HEK293 (cell line): ENCODE measurements at regions of chr2 and their contacts with region 1.

Region 1: GRCh38 chr2:71510196-71510807 is 56.9 kb downstream of the DYSF start:
- H3K4me3 ChIP-seq: no peak overlapping the region
- H3K27ac ChIP-seq: no peak overlapping the region
- H3K4me1 ChIP-seq: no peaks in the 10 kb centered on the region
- CTCF ChIP-seq: peak; percentile 81

Region 2: DNA sequence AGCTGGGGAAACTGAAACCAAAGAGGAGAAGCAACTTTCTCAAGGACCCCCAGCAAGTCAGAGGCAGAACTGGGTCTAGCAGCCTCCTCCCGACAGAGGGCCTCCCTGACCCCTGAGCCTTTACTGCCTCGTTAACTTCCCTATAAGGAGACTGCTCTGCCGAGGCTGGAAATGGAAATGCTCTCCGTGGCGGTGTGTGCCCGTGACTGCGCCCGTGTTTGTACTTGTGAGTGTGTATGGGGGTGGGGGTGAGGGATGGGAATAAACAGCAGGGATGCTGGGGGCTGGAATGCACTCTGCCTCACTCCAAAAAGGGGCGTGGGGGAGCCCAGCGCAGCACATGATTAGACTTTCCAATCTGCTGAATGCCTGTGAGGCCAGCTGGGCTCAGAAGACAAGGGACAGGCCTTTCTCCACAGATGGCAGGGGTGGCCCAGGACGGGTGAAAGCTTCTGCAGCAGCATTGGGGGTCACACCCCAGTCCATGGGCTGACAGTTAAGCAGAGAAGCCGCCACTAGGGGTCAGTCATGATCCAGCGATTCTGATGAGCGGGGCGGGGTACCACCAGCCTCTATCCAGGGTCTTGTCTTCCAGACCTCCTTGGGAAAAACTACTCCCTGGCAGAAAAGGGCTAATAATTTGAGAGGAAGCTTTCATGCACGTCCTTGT is 353.0 kb before region 1 on chr2:
- CTCF ChIA-PET with region 1: interaction called, 16 read pairs
- POLR2A ChIA-PET with region 1: no interaction called
- H3K4me3 ChIP-seq: no peak overlapping the region
- H3K27ac ChIP-seq: no peak overlapping the region
- H3K4me1 ChIP-seq: peaks cover 4% of the 10 kb centered on the region; the same call in 1 of the 2 replicates
- CTCF ChIP-seq: peak; percentile 75

Region 3: GRCh38 chr2:71299507-71299906 is 210.8 kb before region 1 on chr2:
- CTCF ChIA-PET with region 1: interaction called, 94 read pairs
- POLR2A ChIA-PET with region 1: interaction called, 4 read pairs
- H3K4me3 ChIP-seq: no peak overlapping the region
- H3K27ac ChIP-seq: no peak overlapping the region
- H3K4me1 ChIP-seq: no peaks in the 10 kb centered on the region
- CTCF ChIP-seq: no peak

Region 4: DNA sequence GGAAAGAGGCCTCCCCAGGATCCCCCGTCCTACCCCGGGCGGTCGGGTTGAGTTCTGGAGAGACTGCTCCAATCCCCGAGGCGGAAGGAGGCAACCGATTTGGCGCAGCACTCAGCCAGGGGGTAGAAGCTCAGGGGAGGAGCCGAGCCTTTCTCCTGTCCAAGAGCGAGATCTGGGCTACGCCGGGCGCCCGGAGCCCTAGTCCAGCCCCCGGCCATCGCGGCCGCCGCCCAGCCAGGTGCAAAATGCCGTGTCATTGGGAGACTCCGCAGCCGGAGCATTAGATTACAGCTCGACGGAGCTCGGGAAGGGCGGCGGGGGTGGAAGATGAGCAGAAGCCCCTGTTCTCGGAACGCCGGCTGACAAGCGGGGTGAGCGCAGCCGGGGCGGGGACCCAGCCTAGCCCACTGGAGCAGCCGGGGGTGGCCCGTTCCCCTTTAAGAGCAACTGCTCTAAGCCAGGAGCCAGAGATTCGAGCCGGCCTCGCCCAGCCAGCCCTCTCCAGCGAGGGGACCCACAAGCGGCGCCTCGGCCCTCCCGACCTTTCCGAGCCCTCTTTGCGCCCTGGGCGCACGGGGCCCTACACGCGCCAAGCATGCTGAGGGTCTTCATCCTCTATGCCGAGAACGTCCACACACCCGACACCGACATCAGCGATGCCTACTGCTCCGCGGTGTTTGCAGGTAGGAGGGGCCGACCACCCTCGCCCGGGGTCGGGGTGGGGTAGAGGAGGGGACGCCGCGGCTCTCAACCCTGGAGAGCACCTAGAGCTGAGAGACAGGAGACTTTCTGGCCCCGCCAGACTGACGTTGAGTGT is 56.7 kb before region 1 on chr2 and contains the start of gene DYSF:
- CTCF ChIA-PET with region 1: interaction called, 11 read pairs
- POLR2A ChIA-PET with region 1: no interaction called
- H3K4me3 ChIP-seq: no peak within 1 kb of the TSS
- H3K27ac ChIP-seq: no peak within 1 kb of the TSS
- H3K4me1 ChIP-seq: 0 out of 2 replicates have a peak, but pooled peaks cover 4% of the 10 kb centered on the region
- CTCF ChIP-seq: no peak

Region 5: GRCh38 chr2:71466303-71467173 is 43.8 kb before region 1 on chr2:
- CTCF ChIA-PET with region 1: interaction called, 32 read pairs
- POLR2A ChIA-PET with region 1: no interaction called
- H3K4me3 ChIP-seq: peak overlapping the region; percentile 46
- H3K27ac ChIP-seq: no peak overlapping the region
- H3K4me1 ChIP-seq: no peaks in the 10 kb centered on the region
- CTCF ChIP-seq: 0 out of 2 replicates have a peak, but pooled peaks have one; percentile 20